K562 (cell line): ENCODE measurements at regions of chr1 and their contacts with region 1.

Region 1: GRCh38 chr1:51616901-51617708 is at the start of gene OSBPL9:
- DNase-seq: peak; percentile 95 to 97 (median 96)
- ATAC-seq: peak; percentile 90
- H3K4me3 ChIP-seq: peak within 1 kb of the TSS; percentile 86
- H3K27ac ChIP-seq: peak within 1 kb of the TSS; percentile 94
- H3K4me1 ChIP-seq: peaks cover 16 to 40% of the 10 kb centered on the region in 2 experiments
- H3K27me3 ChIP-seq: no peaks in the 10 kb centered on the region
- CTCF ChIP-seq: no peak; a peak in 1 of 6 replicates
- EP300 ChIP-seq: no peak
- POLR2A ChIP-seq: peak; percentile 95
- RAD21 ChIP-seq: no peak
- polyA plus RNA-seq, gene OSBPL9: 43.9 to 66.2 TPM

Region 2: GRCh38 chr1:51600529-51600928 is 16.6 kb before region 1 on chr1:
- CTCF ChIA-PET with region 1: no interaction called
- POLR2A ChIA-PET with region 1: interaction called, 11 read pairs
- in situ Hi-C with region 1: no loop called
- intact Hi-C with region 1: no loop called
- DNase-seq: no peak
- ATAC-seq: no peak
- H3K4me3 ChIP-seq: no peak overlapping the region
- H3K27ac ChIP-seq: no peak overlapping the region
- H3K4me1 ChIP-seq: peaks cover 0 to 3% of the 10 kb centered on the region in 2 experiments; a peak in 1 of 5 replicates
- H3K27me3 ChIP-seq: no peaks in the 10 kb centered on the region; a peak in 1 of 5 replicates
- CTCF ChIP-seq: no peak
- EP300 ChIP-seq: no peak
- POLR2A ChIP-seq: no peak
- RAD21 ChIP-seq: no peak

Region 3: DNA sequence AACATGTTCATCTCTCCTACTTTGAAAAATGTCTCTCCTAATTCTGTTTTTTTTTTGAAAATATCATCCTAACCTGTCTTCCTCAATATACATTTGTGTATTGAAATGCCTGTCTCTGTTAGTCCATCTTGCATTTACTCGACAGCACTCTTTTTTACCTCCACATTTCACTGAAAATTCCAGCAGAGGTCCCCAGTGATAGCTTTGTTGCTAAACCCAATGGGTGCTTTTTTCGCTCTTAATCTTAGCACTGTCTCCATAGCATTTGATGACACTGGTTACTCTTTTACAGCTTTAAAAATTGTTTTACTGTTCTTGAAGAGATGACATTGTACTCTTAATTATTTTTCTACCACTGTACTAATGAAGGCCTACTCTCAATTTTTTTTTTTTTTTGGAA is 10.6 kb after region 1 on chr1:
- CTCF ChIA-PET with region 1: no interaction called
- POLR2A ChIA-PET with region 1: interaction called, 27 read pairs
- in situ Hi-C with region 1: no loop called
- intact Hi-C with region 1: no loop called
- DNase-seq: peak in 2 of 4 experiments; percentile 63 to 80
- ATAC-seq: peak; percentile 71
- H3K4me3 ChIP-seq: no peak overlapping the region
- H3K27ac ChIP-seq: no peak overlapping the region
- H3K4me1 ChIP-seq: peaks cover 21 to 35% of the 10 kb centered on the region in 2 experiments
- H3K27me3 ChIP-seq: no peaks in the 10 kb centered on the region
- CTCF ChIP-seq: peak; percentile 65 to 83 (median 72)
- EP300 ChIP-seq: no peak
- POLR2A ChIP-seq: no peak
- RAD21 ChIP-seq: peak; percentile 70 to 91